ENCODE measurements at regions of chr6 and their contacts with region 1.

Region 1: GRCh38 chr6:17584241-17584803 is 15.8 kb upstream of the FAM8A1 start:
- DNase-seq: peak; percentile 23
- H3K4me3 Mint-ChIP-seq: no peak overlapping the region
- H3K27ac Mint-ChIP-seq: no peak overlapping the region
- H3K4me1 Mint-ChIP-seq: peaks cover 13% of the 10 kb centered on the region
- H3K27me3 Mint-ChIP-seq: no peaks in the 10 kb centered on the region
- CTCF ChIP-seq: peak; percentile 61

Region 2: GRCh38 chr6:17156112-17156921 is 428.0 kb before region 1 on chr6:
- CTCF ChIA-PET with region 1: interaction called, 7 read pairs
- intact Hi-C with region 1: loop called (anchors 1 kb)
- DNase-seq: peak; percentile 64
- H3K4me3 Mint-ChIP-seq: no peak overlapping the region
- H3K27ac Mint-ChIP-seq: no peak overlapping the region
- H3K4me1 Mint-ChIP-seq: no peaks in the 10 kb centered on the region
- H3K27me3 Mint-ChIP-seq: no peaks in the 10 kb centered on the region
- CTCF ChIP-seq: peak; percentile 64

Region 3: DNA sequence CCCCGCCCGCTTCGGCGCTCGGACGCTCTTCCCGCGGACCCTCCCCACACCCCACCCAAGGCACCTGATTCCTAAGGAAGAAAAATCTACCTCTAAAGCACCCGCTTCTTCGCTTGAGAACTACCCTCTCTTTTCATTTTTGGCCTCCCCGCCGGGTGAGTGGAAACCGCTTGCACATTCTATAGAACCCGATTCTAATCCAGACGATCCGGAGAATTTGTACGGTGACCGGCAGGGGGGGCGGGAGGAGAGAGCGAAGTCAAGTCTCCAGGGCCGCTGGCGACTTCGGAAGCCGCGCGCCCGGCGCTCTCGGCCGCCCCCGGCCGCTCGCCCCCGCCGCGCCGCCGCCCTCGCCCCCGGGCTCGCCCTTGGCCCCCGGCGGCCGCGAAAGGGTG is 303.2 kb before region 1 on chr6 and contains the start of gene RBM24:
- CTCF ChIA-PET with region 1: no interaction called
- intact Hi-C with region 1: loop called (anchors 5 kb)
- DNase-seq: peak; percentile 76
- H3K4me3 Mint-ChIP-seq: peak within 1 kb of the TSS; percentile 84
- H3K27ac Mint-ChIP-seq: no peak within 1 kb of the TSS
- H3K4me1 Mint-ChIP-seq: peaks cover 13% of the 10 kb centered on the region
- H3K27me3 Mint-ChIP-seq: no peaks in the 10 kb centered on the region
- CTCF ChIP-seq: peak; percentile 20
- total RNA-seq, gene RBM24: 0.47 and 1.1 TPM in 2 replicates

Region 4: GRCh38 chr6:17803409-17803808 is 219.1 kb after region 1 on chr6:
- CTCF ChIA-PET with region 1: interaction called, 6 read pairs
- intact Hi-C with region 1: loop called (anchors 5 kb)
- DNase-seq: no peak
- H3K4me3 Mint-ChIP-seq: no peak overlapping the region
- H3K27ac Mint-ChIP-seq: no peak overlapping the region
- H3K4me1 Mint-ChIP-seq: no peaks in the 10 kb centered on the region
- H3K27me3 Mint-ChIP-seq: no peaks in the 10 kb centered on the region
- CTCF ChIP-seq: no peak

Region 5: DNA sequence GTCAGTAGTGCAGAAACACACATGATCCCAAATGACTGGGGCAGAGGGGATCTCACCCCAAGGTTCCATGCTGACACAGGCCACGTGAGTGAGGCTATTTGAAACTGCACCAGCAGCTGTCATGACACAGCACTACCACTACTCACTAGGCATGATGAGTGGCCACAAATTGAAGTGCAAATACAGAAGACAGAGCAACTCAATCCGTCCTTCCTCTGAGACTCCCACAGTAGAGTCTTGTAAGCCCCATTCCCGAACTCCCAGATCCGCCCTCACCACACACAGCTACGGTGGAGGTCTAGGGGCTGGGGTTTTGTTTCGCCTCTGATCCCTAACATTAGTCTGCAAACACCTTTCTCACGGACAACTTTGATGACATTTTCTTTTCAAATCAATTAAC is 235.7 kb after region 1 on chr6:
- CTCF ChIA-PET with region 1: no interaction called
- intact Hi-C with region 1: loop called (anchors 1 kb)
- DNase-seq: no peak
- H3K4me3 Mint-ChIP-seq: no peak overlapping the region
- H3K27ac Mint-ChIP-seq: no peak overlapping the region
- H3K4me1 Mint-ChIP-seq: peaks cover 7% of the 10 kb centered on the region
- H3K27me3 Mint-ChIP-seq: no peaks in the 10 kb centered on the region
- CTCF ChIP-seq: no peak